CD8-positive, alpha-beta memory T cell (primary cell): ENCODE measurements at regions of chr2 and their contacts with region 1.

Region 1: GRCh38 chr2:26959331-26959730 is 11.1 kb upstream of the MAPRE3 start:
- DNase-seq: no peak
- H3K4me3 ChIP-seq: no peak overlapping the region
- H3K4me3 Mint-ChIP-seq: no peak overlapping the region
- H3K27ac ChIP-seq: no peak overlapping the region
- H3K27ac Mint-ChIP-seq: no peak overlapping the region
- H3K4me1 ChIP-seq: no peaks in the 10 kb centered on the region
- H3K4me1 Mint-ChIP-seq: peaks cover 0 to 3% (median 0%) of the 10 kb centered on the region in 3 donors
- H3K27me3 ChIP-seq: peaks cover 4% of the 10 kb centered on the region
- H3K27me3 Mint-ChIP-seq: peaks cover 30 to 55% of the 10 kb centered on the region in 2 donors

Region 2: GRCh38 chr2:27086090-27086723 is 126.9 kb after region 1 on chr2:
- CTCF ChIA-PET with region 1: interaction called, 16 read pairs
- POLR2A ChIA-PET with region 1: no interaction called
- DNase-seq: peak; percentile 97 to 99 (median 97)
- H3K4me3 ChIP-seq: peak overlapping the region; percentile 60
- H3K4me3 Mint-ChIP-seq: peak overlapping the region; percentile 79 to 94 (median 82)
- H3K27ac ChIP-seq: peak overlapping the region; percentile 75
- H3K27ac Mint-ChIP-seq: peak overlapping the region; percentile 46 to 94 (median 73)
- H3K4me1 ChIP-seq: peaks cover 32% of the 10 kb centered on the region
- H3K4me1 Mint-ChIP-seq: peaks cover 20 to 25% (median 24%) of the 10 kb centered on the region in 3 donors
- H3K27me3 ChIP-seq: no peaks in the 10 kb centered on the region
- H3K27me3 Mint-ChIP-seq: no peaks in the 10 kb centered on the region

Region 3: DNA sequence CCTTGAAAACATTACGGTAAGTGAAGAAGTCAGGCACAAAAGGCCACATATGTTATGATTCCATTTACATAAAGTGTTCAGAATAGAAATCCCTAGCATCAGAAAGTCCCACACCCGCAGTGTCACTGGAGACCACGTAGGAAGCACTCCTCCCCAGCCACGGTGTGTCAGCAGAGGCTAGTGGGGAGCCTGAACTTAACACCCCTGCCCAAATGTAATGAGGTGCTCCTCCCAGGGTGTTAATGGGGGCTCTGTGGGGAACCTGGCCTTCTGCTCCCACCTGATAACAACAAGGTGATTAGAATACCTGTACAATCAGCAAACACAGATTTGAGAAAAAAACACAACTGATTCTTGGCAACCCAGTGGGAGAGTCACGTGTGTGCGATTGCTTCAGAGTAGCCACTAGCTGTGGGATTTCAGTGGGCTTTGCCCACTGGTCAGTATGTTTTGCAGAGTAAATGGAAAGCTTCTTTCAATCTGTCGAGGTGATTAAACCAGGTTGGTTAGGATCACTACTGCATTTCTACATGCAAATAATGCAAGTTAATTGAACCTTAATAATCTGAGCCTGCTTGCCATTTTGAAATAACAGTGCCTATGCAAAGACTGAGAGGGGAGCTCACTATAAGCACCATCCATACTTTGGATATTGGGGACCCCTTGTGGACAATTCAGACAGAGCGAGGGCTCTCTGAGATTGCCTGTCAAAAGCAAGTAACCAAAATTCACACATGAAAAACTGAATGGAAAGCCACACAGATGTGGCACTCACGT is 231.9 kb after region 1 on chr2:
- CTCF ChIA-PET with region 1: interaction called, 12 read pairs
- POLR2A ChIA-PET with region 1: no interaction called
- DNase-seq: peak in 4 of 5 donors; percentile 20 to 63 (median 45)
- H3K4me3 ChIP-seq: no peak overlapping the region
- H3K4me3 Mint-ChIP-seq: no peak overlapping the region
- H3K27ac ChIP-seq: no peak overlapping the region
- H3K27ac Mint-ChIP-seq: no peak overlapping the region
- H3K4me1 ChIP-seq: no peaks in the 10 kb centered on the region
- H3K4me1 Mint-ChIP-seq: no peaks in the 10 kb centered on the region
- H3K27me3 ChIP-seq: no peaks in the 10 kb centered on the region
- H3K27me3 Mint-ChIP-seq: peaks cover 16 to 19% of the 10 kb centered on the region in 2 donors